ENCODE measurements at regions of chr19 and their contacts with region 1.

Region 1: GRCh38 chr19:7611541-7612279 is 16.0 kb downstream of the CAMSAP3 start:
- DNase-seq: no peak
- H3K4me3 ChIP-seq: no peak overlapping the region
- H3K27ac ChIP-seq: no peak overlapping the region
- H3K4me1 ChIP-seq: no peaks in the 10 kb centered on the region
- H3K27me3 ChIP-seq: no peaks in the 10 kb centered on the region
- CTCF ChIP-seq: no peak
- POLR2A ChIP-seq: no peak

Region 2: GRCh38 chr19:7550987-7551761 is 60.5 kb before region 1 on chr19:
- intact Hi-C with region 1: loop called (anchors 2 kb)
- DNase-seq: peak in 1 of 2 donors; percentile 76
- H3K4me3 ChIP-seq: peak overlapping the region in 2 of 3 donors; percentile 36 to 53
- H3K27ac ChIP-seq: no peak overlapping the region
- H3K4me1 ChIP-seq: no peaks in the 10 kb centered on the region
- H3K27me3 ChIP-seq: no peaks in the 10 kb centered on the region
- CTCF ChIP-seq: no peak
- POLR2A ChIP-seq: no peak

Measured in breast epithelium (tissue), 4 donors.